Activated CD4-positive, alpha-beta T cell treated with anti-CD3 and anti-CD28 coated beads, Interleukin-2, amount 10 ng/mL, durations not matched to agents 7 days and 5 days (primary cell): ENCODE measurements at regions of chr10 and their contacts with region 1.

Region 1: DNA sequence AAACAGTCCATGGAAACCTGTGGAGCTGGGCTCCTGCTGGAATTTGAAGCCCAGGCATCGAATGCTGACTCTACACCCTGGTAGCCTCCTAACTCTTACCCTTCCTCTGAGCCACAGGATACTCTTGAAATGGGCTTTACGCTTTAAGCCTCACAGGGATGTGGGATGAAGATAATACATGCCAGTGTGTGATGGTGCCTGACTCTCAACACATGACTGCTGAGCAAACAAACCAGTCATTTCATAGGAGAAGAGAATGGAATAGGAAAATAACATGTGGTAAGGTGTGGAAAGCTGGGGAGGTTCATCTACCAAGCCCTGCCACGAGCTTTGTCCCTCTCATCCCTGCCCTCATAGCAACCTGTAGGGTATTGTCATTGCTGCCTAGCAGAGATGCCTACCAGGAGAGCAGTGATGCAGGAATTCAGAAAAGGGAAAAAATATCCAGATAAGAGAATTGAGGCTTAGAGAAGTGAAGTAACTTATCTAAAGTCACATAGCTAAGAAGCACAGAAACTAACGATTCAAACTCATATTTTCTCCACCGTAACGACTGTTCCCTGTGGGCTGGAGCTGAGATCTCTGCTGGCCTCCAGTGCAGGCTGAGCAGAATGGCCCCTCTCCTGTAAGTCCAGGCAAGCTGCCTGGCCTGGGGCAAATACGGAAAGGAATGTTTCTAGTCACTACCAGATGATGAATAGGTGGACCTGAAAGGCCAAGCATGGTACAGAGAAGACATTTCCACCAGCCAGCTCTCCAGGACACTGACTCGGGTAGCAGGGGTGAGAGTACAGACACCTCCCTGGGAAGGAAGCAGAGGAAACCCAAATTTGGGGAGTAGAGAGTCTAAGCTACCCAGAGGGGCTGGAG is 90.2 kb upstream of the DUSP5 start:
- DNase-seq: no peak
- H3K4me3 Mint-ChIP-seq: no peak overlapping the region
- H3K27ac Mint-ChIP-seq: no peak overlapping the region
- H3K4me1 Mint-ChIP-seq: peaks cover 8% of the 10 kb centered on the region
- H3K27me3 Mint-ChIP-seq: peaks cover 13% of the 10 kb centered on the region

Region 2: DNA sequence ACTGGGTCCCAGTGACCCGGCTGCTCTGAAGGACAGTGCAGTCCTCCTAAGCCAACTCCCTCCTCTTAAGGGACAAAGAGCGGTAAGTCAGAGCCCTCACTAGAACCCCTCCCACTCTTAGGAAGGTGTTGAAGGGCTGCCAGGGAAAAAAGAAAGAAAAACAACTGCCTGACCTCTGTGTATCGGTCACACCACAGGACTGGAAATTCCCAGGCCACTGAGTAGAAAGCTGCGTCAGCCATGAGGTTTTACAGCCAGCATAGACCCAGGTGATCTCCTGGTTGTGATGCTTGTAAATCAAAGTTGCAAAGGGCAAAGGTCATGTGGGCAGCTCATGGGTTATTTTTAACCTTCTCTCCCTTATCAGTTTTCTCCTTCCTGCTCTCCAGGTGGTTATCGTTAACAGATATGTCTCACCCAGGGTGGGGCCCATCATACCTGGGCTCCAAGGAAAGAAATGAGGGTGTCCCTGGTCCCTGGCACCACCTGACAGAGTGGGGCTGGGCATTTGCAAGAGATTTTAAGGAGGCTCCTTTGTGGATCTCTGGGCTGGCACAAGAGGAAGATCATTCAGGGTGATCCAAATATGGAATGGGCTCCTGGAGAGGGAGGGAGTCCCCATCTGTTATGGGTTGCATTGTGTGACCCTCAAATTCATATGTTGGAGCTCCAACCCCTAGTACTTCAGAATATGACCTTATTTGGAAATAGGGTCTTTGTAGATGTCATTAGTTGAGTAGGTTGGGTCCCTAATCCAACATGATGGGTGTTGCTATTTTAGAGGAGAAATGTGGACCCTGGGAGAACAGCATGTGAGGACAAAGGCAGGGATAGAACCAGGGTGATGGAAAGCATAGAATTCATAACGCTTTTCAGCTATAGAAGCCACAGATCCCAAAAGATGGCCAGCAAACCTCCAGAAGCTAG is 11.5 kb before region 1 on chr10:
- CTCF ChIA-PET with region 1: interaction called, 17 read pairs
- POLR2A ChIA-PET with region 1: no interaction called
- DNase-seq: no peak
- H3K4me3 Mint-ChIP-seq: no peak overlapping the region
- H3K27ac Mint-ChIP-seq: no peak overlapping the region
- H3K4me1 Mint-ChIP-seq: peaks cover 14% of the 10 kb centered on the region
- H3K27me3 Mint-ChIP-seq: no peaks in the 10 kb centered on the region